ENCODE measurements at regions of chr12 and their contacts with region 1.

Region 1: DNA sequence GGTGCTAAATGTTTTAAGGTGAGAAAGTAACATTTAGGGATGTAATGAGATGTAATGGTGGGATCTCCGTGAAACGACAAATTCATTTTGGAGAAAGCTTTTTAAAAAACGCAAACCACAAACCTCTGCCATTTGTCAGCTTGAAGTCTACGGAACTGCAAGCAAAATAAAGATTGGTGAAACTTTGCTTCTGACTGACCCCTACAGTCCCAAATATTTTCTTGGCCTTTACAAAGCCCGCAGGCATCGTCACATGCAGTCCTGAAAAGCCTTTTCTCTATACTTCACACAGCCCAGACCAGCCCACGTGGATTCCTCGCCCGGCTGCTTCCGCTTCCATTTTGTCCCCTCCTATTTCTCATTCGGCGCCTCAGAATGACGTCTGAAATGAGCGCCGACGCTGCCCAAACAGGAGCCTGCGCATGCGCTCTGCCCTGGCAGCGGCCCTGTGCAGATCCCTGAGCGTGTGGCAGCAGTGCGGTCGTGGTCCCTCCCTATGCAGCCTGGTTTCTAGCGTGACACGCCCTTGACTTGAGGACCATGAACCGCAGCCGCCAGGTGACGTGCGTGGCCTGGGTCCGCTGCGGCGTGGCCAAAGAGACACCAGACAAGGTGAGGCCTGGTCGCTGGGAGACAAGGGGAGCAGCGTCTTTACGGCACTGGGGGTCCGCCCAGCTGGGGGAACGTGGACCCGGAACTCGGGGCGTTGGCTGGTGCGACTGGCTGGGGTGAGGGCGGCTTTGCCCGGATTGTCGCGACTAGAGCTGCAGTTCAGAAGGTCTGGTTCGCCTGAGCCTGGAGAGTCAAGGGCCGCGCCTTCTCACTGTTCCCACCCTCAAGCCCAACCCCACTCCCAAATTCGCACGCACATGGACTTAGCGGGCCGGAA is at the start of gene PWP1:
- DNase-seq: peak; percentile 94
- H3K4me3 Mint-ChIP-seq: peak within 1 kb of the TSS; percentile 90
- H3K27ac Mint-ChIP-seq: peak within 1 kb of the TSS; percentile 98
- H3K4me1 Mint-ChIP-seq: peaks cover 18% of the 10 kb centered on the region
- H3K27me3 Mint-ChIP-seq: no peaks in the 10 kb centered on the region
- CTCF ChIP-seq: no peak
- total RNA-seq, gene PWP1: 41.5 and 49.7 TPM in 2 replicates

Region 2: DNA sequence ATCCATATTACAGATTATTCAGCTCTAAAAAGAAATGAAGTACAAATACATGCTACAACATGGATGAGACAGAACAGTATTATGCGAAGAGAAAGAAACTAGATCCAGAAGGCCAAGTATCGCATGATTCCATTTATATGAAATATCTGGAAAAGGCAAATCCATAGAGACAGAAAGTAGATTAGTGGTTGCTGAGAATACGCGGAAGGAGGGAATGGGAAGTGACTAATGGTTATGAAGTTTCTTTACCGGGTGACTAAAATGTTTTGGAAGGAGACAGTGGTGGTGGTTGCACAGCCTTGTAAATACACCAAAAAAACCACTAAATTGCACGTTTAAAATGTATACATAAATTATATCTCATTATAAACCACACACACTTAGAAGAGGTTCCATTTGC is 62.9 kb after region 1 on chr12:
- CTCF ChIA-PET with region 1: no interaction called
- POLR2A ChIA-PET with region 1: no interaction called
- intact Hi-C with region 1: loop called (anchors 5 kb)
- DNase-seq: peak; percentile 59
- H3K4me3 Mint-ChIP-seq: no peak overlapping the region
- H3K27ac Mint-ChIP-seq: no peak overlapping the region
- H3K4me1 Mint-ChIP-seq: no peaks in the 10 kb centered on the region
- H3K27me3 Mint-ChIP-seq: no peaks in the 10 kb centered on the region
- CTCF ChIP-seq: no peak

Region 3: DNA sequence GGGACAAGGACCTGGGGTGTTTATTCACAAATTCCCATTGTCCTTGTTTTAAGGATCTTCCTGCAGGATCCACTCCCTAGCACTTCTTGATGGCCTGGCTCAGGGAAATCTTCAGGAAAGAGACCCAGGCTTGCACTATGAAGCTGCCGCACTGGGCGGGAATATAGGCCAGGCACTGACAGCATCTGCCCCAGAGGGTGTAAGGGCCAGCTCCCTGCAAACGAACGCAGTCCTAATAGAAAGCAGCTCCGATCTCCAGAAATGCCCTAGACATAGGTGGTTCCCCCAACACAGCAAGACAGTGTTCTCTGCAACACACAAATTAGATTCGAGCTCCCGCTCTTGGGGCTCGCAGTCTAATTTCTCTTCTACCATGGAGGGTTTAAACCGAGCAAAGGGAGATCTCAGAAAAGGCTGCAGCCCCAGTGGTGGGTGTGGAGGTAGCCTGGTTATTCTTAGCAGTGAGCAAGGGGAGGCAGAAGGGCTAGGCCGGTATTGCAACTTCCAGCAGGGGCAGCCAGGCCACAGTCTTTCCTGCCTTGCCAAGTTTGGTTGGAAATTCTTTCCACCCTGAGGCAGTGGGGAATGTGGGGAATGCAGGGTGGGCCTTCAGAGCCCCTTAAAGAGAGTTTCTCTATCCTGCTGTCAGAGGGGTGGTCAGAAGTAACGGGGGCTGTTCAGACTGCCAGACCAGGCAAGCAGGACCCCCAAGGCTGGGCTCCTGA is 427.4 kb after region 1 on chr12:
- CTCF ChIA-PET with region 1: no interaction called
- POLR2A ChIA-PET with region 1: no interaction called
- intact Hi-C with region 1: no loop called
- DNase-seq: no peak
- H3K4me3 Mint-ChIP-seq: no peak overlapping the region
- H3K27ac Mint-ChIP-seq: no peak overlapping the region
- H3K4me1 Mint-ChIP-seq: no peaks in the 10 kb centered on the region
- H3K27me3 Mint-ChIP-seq: no peaks in the 10 kb centered on the region
- CTCF ChIP-seq: no peak

Measured in MCF 10A (cell line).